Naive thymus-derived CD4-positive, alpha-beta T cell (primary cell): ENCODE measurements at regions of chr11 and their contacts with region 1.

Region 1: GRCh38 chr11:128720522-128720985 is 26.7 kb downstream of the FLI1 start:
- DNase-seq: peak in 7 of 9 donors; percentile 53 to 68 (median 59)
- ATAC-seq: peak; percentile 51
- H3K4me3 ChIP-seq: peak overlapping the region; percentile 41
- H3K4me3 Mint-ChIP-seq: peak overlapping the region; percentile 78 to 92 (median 85)
- H3K27ac ChIP-seq: peak overlapping the region; percentile 73
- H3K27ac Mint-ChIP-seq: peak overlapping the region; percentile 86 to 99 (median 96)
- H3K4me1 ChIP-seq: peaks cover 99 to 100% of the 10 kb centered on the region in 2 donors
- H3K4me1 Mint-ChIP-seq: peaks cover 95 to 100% (median 100%) of the 10 kb centered on the region in 7 donors
- H3K27me3 ChIP-seq: no peaks in the 10 kb centered on the region
- H3K27me3 Mint-ChIP-seq: no peaks in the 10 kb centered on the region

Region 2: GRCh38 chr11:128666397-128666796 is 54.2 kb before region 1 on chr11:
- CTCF ChIA-PET with region 1: no interaction called
- POLR2A ChIA-PET with region 1: no interaction called
- intact Hi-C with region 1: no loop called
- DNase-seq: no peak
- ATAC-seq: peak; percentile 34
- H3K4me3 ChIP-seq: no peak overlapping the region
- H3K4me3 Mint-ChIP-seq: no peak overlapping the region
- H3K27ac ChIP-seq: no peak overlapping the region
- H3K27ac Mint-ChIP-seq: no peak overlapping the region
- H3K4me1 ChIP-seq: no peaks in the 10 kb centered on the region
- H3K4me1 Mint-ChIP-seq: peaks cover 0 to 9% (median 0%) of the 10 kb centered on the region in 7 donors
- H3K27me3 ChIP-seq: no peaks in the 10 kb centered on the region
- H3K27me3 Mint-ChIP-seq: peaks cover 0 to 58% (median 3%) of the 10 kb centered on the region in 5 donors

Region 3: DNA sequence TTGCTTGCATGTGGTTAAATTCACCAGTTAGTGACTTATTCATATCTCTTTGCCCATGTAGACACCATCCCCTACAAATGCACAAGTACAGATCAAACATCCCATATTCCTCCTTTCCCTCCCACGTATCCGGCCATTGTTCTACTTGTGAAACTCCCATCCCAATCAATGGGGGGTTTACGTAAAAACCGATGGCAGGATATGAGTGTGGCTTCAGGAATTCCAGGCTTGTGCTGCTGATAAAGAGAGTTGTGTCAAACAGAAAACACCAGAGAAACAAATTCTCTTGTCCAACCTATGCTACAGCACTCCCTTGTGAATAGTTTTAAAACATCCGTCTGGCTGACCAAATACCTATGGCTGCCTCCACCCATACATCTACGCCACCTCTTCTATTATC is 11.2 kb before region 1 on chr11:
- CTCF ChIA-PET with region 1: interaction called, 6 read pairs
- POLR2A ChIA-PET with region 1: interaction called, 18 read pairs
- intact Hi-C with region 1: loop called (anchors 1 kb)
- DNase-seq: no peak
- ATAC-seq: no peak
- H3K4me3 ChIP-seq: no peak overlapping the region
- H3K4me3 Mint-ChIP-seq: peak overlapping the region in 6 of 10 donors; percentile 0 to 47 (median 26)
- H3K27ac ChIP-seq: no peak overlapping the region
- H3K27ac Mint-ChIP-seq: peak overlapping the region in 7 of 9 donors; percentile 33 to 80 (median 63)
- H3K4me1 ChIP-seq: peaks cover 76 to 77% of the 10 kb centered on the region in 2 donors
- H3K4me1 Mint-ChIP-seq: peaks cover 75 to 100% (median 98%) of the 10 kb centered on the region in 7 donors
- H3K27me3 ChIP-seq: no peaks in the 10 kb centered on the region
- H3K27me3 Mint-ChIP-seq: no peaks in the 10 kb centered on the region

Region 4: GRCh38 chr11:128733440-128734102 is 13.0 kb after region 1 on chr11:
- CTCF ChIA-PET with region 1: interaction called, 19 read pairs
- POLR2A ChIA-PET with region 1: interaction called, 46 read pairs
- intact Hi-C with region 1: loop called (anchors 1 to 2 kb)
- DNase-seq: peak in 3 of 9 donors; percentile 27 to 43 (median 37)
- ATAC-seq: peak; percentile 39
- H3K4me3 ChIP-seq: peak overlapping the region; percentile 20
- H3K4me3 Mint-ChIP-seq: peak overlapping the region; percentile 79 to 92 (median 85)
- H3K27ac ChIP-seq: peak overlapping the region; percentile 41
- H3K27ac Mint-ChIP-seq: peak overlapping the region; percentile 85 to 98 (median 90)
- H3K4me1 ChIP-seq: peaks cover 96 to 100% of the 10 kb centered on the region in 2 donors
- H3K4me1 Mint-ChIP-seq: peaks cover 81 to 100% (median 98%) of the 10 kb centered on the region in 7 donors
- H3K27me3 ChIP-seq: no peaks in the 10 kb centered on the region
- H3K27me3 Mint-ChIP-seq: no peaks in the 10 kb centered on the region

Region 5: DNA sequence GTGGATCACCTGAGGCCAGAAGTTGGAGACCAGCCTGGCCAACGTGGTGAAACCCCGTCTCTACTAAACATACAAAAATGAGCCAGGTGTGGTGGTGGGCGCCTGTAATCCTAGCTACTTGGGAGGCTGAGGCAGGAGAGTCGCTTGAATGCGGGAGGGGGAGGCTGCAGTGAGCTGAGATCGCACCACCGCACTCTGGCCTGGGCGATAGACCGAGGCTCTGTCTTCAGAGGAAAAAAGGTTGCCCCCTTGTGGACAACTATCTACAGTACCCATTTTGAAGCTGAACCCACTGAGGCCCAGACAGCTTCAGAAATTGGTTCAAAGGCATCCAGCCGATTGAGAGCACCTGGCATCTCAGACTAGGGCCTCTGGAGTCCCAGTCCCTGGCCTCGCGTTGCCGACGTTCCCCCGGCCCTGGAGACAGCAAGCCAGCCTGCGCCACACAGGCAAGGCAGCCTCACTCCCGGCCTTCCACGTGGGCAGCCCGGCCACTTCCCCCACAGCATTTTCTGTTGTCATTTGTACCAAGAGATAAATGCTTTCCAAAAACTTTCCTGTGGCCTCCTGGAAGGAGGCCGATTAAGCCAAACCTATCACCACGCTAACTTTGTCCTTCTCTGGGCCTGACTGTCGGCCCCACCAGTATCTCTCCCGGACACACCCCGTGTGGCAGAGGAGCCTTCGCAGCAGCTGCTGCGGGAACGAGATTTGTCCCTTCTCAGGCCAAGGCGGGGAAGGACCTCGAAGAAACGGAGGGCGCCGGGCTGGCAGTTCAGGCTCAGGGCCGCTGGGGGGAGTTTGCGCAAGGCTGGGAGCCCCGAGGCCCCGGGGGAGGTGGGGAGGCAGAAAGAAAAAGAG is 56.1 kb after region 1 on chr11:
- CTCF ChIA-PET with region 1: interaction called, 3 read pairs
- POLR2A ChIA-PET with region 1: interaction called, 5 read pairs
- intact Hi-C with region 1: loop called in 1 of 2 experiments (anchors 2 kb)
- DNase-seq: peak in 7 of 9 donors; percentile 12 to 44 (median 38)
- ATAC-seq: peak; percentile 80
- H3K4me3 ChIP-seq: no peak overlapping the region
- H3K4me3 Mint-ChIP-seq: no peak overlapping the region
- H3K27ac ChIP-seq: no peak overlapping the region
- H3K27ac Mint-ChIP-seq: peak overlapping the region in 6 of 9 donors; percentile 34 to 65 (median 58)
- H3K4me1 ChIP-seq: peaks cover 21 to 34% of the 10 kb centered on the region in 2 donors
- H3K4me1 Mint-ChIP-seq: peaks cover 46 to 89% (median 66%) of the 10 kb centered on the region in 7 donors
- H3K27me3 ChIP-seq: no peaks in the 10 kb centered on the region
- H3K27me3 Mint-ChIP-seq: no peaks in the 10 kb centered on the region

Region 6: GRCh38 chr11:128981254-128981653 is 260.7 kb after region 1 on chr11:
- CTCF ChIA-PET with region 1: no interaction called
- POLR2A ChIA-PET with region 1: no interaction called
- intact Hi-C with region 1: no loop called
- DNase-seq: no peak
- ATAC-seq: no peak
- H3K4me3 ChIP-seq: no peak overlapping the region
- H3K4me3 Mint-ChIP-seq: no peak overlapping the region
- H3K27ac ChIP-seq: no peak overlapping the region
- H3K27ac Mint-ChIP-seq: no peak overlapping the region
- H3K4me1 ChIP-seq: no peaks in the 10 kb centered on the region
- H3K4me1 Mint-ChIP-seq: peaks cover 0 to 9% (median 0%) of the 10 kb centered on the region in 7 donors
- H3K27me3 ChIP-seq: no peaks in the 10 kb centered on the region
- H3K27me3 Mint-ChIP-seq: no peaks in the 10 kb centered on the region

Region 7: GRCh38 chr11:130623670-130624668 is 1903.4 kb after region 1 on chr11:
- CTCF ChIA-PET with region 1: no interaction called
- POLR2A ChIA-PET with region 1: no interaction called
- intact Hi-C with region 1: no loop called
- DNase-seq: no peak
- ATAC-seq: no peak
- H3K4me3 ChIP-seq: no peak overlapping the region
- H3K4me3 Mint-ChIP-seq: no peak overlapping the region
- H3K27ac ChIP-seq: no peak overlapping the region
- H3K27ac Mint-ChIP-seq: no peak overlapping the region
- H3K4me1 ChIP-seq: no peaks in the 10 kb centered on the region
- H3K4me1 Mint-ChIP-seq: no peaks in the 10 kb centered on the region
- H3K27me3 ChIP-seq: no peaks in the 10 kb centered on the region
- H3K27me3 Mint-ChIP-seq: peaks cover 10 to 49% (median 24%) of the 10 kb centered on the region in 5 donors